GM12878 (cell line): ENCODE measurements at regions of chrX and their contacts with region 1.

Region 1: DNA sequence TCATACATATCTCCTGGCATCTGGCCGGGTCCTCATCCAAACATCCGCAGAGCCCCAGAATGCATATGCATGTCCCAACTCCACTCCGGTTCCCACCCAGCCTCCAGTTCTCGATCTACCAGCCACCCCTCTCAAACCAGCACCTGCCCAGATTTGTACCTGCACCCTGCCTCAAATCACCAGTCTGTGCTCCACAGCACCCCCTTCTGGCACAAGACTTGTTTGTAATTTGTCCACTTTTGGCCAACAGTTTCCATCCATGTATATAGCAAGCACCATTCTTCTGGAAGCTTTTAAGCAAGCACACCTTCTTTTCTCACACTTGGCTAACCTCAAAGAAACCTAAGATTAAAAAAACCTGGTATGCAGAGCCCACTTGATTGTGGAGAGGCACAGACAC is 644.1 kb downstream of the MID1IP1 start:
- DNase-seq: no peak
- ATAC-seq: no peak
- H3K4me3 ChIP-seq: no peak overlapping the region
- H3K27ac ChIP-seq: no peak overlapping the region
- H3K4me1 ChIP-seq: peaks cover 9% of the 10 kb centered on the region
- H3K27me3 ChIP-seq: no peaks in the 10 kb centered on the region
- CTCF ChIP-seq: peak in 2 of 3 experiments; percentile 25 to 44; a peak in 2 of 6 replicates
- EP300 ChIP-seq: no peak
- POLR2A ChIP-seq: no peak
- RAD21 ChIP-seq: peak; percentile 34

Region 2: DNA sequence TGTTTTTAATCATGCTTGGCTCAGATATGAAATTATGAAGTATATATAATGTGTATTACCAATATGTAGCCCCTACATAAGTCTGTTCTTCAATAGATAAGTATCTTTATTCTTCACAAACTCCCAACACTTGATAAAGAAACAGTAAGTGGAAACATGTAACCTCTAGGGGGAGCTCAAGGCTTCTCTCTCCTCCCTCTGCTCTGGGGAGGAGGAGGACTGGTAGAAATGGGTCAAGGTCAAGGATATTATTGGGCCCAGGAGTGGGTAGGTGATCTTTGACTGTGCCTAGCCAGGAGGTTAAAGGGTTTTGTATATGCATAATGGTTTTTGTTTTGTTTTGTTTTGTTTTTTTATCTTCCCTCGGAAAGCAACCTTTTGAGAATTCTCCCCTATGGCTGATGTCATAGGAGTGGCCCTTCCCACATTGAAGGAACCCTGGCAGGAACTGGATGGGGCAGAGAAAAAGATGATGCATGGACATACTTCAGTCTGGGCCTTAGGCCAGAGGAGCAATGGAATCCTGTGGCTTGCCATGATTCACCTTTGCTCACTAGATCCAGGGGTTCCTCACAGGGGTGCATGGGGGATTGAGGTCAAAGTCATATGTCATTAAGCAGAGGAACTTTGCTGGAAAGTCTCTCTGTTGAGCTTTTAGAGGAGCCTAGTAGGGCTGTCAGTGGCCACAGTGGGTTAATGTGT is 183.7 kb before region 1 on chrX:
- CTCF ChIA-PET with region 1: interaction called, 6 read pairs
- POLR2A ChIA-PET with region 1: no interaction called
- RAD21 ChIA-PET with region 1: interaction called, 6 read pairs
- SMC1A ChIA-PET with region 1: interaction called, 4 read pairs
- in situ Hi-C with region 1: no loop called
- intact Hi-C with region 1: loop called (anchors 10 kb)
- DNase-seq: no peak
- ATAC-seq: peak; percentile 81
- H3K4me3 ChIP-seq: no peak overlapping the region
- H3K27ac ChIP-seq: no peak overlapping the region
- H3K4me1 ChIP-seq: no peaks in the 10 kb centered on the region
- H3K27me3 ChIP-seq: no peaks in the 10 kb centered on the region
- CTCF ChIP-seq: peak; percentile 57 to 65 (median 59)
- EP300 ChIP-seq: no peak
- POLR2A ChIP-seq: no peak
- RAD21 ChIP-seq: peak; percentile 78